ENCODE measurements at regions of chr9 and their contacts with region 1.

Region 1: GRCh38 chr9:130107234-130107861 is 53.6 kb downstream of the GPR107 start:
- DNase-seq: peak; percentile 73 to 82 (median 77)
- H3K4me3 ChIP-seq: no peak overlapping the region
- H3K4me3 Mint-ChIP-seq: peak overlapping the region in 2 of 8 donors; percentile 18 to 30
- H3K27ac ChIP-seq: no peak overlapping the region
- H3K27ac Mint-ChIP-seq: peak overlapping the region; percentile 39 to 85 (median 80)
- H3K4me1 ChIP-seq: peaks cover 9% of the 10 kb centered on the region
- H3K4me1 Mint-ChIP-seq: peaks cover 10 to 15% (median 14%) of the 10 kb centered on the region in 4 donors
- H3K27me3 ChIP-seq: no peaks in the 10 kb centered on the region
- H3K27me3 Mint-ChIP-seq: no peaks in the 10 kb centered on the region

Region 2: GRCh38 chr9:129944506-129945116 is 162.7 kb before region 1 on chr9:
- CTCF ChIA-PET with region 1: no interaction called
- POLR2A ChIA-PET with region 1: no interaction called
- intact Hi-C with region 1: no loop called
- DNase-seq: peak; percentile 70 to 83 (median 80)
- H3K4me3 ChIP-seq: no peak overlapping the region
- H3K4me3 Mint-ChIP-seq: peak overlapping the region; percentile 33 to 80 (median 52)
- H3K27ac ChIP-seq: peak overlapping the region; percentile 60
- H3K27ac Mint-ChIP-seq: peak overlapping the region; percentile 35 to 92 (median 85)
- H3K4me1 ChIP-seq: peaks cover 59% of the 10 kb centered on the region
- H3K4me1 Mint-ChIP-seq: peaks cover 35 to 70% (median 50%) of the 10 kb centered on the region in 4 donors
- H3K27me3 ChIP-seq: no peaks in the 10 kb centered on the region
- H3K27me3 Mint-ChIP-seq: no peaks in the 10 kb centered on the region

Region 3: GRCh38 chr9:130122456-130122855 is 15.1 kb after region 1 on chr9:
- CTCF ChIA-PET with region 1: interaction called, 27 read pairs
- POLR2A ChIA-PET with region 1: interaction called, 3 read pairs
- intact Hi-C with region 1: no loop called
- DNase-seq: no peak
- H3K4me3 ChIP-seq: no peak overlapping the region
- H3K4me3 Mint-ChIP-seq: no peak overlapping the region
- H3K27ac ChIP-seq: no peak overlapping the region
- H3K27ac Mint-ChIP-seq: no peak overlapping the region
- H3K4me1 ChIP-seq: peaks cover 15% of the 10 kb centered on the region
- H3K4me1 Mint-ChIP-seq: peaks cover 9 to 12% (median 11%) of the 10 kb centered on the region in 4 donors
- H3K27me3 ChIP-seq: no peaks in the 10 kb centered on the region
- H3K27me3 Mint-ChIP-seq: no peaks in the 10 kb centered on the region

Region 4: DNA sequence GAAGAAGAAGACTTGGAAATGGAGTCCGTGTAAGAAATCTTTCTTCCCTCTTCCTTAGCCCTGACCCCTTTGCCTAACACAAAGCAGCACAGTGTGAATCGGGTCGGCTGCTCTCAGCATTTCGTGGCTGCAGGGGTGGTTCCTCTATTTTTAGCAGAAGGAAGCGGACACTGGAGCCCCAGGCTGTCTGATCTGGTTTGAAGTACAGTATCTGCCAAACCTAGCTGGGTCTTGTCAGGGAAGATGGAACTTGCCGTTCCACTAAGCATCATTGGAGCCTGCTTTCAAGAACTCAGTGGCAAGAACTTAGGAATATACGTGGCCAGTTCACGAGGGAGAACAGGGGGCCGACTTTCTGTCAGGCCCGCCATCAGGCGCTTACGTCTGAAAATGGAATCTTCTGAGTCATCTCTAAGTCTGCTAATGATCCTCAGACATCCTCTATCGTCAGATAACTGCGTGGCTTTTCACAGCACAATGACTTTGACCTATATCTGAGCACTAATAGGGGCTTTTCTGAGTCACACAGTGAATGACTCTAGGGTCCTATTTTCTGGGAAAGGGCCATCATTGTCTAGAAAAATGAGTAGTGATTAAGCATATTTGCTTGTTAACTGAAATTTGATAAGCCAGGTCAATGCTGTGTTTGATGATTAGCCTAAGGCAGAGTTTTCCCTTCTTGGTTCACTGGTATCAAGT is 21.5 kb after region 1 on chr9:
- CTCF ChIA-PET with region 1: interaction called, 27 read pairs
- POLR2A ChIA-PET with region 1: interaction called, 5 read pairs
- intact Hi-C with region 1: loop called (anchors 1 kb)
- DNase-seq: peak; percentile 53 to 89 (median 60)
- H3K4me3 ChIP-seq: peak overlapping the region in 1 of 2 donors; percentile 39
- H3K4me3 Mint-ChIP-seq: peak overlapping the region; percentile 79 to 87 (median 84)
- H3K27ac ChIP-seq: peak overlapping the region; percentile 92
- H3K27ac Mint-ChIP-seq: peak overlapping the region; percentile 97 to 100 (median 99)
- H3K4me1 ChIP-seq: peaks cover 60% of the 10 kb centered on the region
- H3K4me1 Mint-ChIP-seq: peaks cover 40 to 67% (median 53%) of the 10 kb centered on the region in 4 donors
- H3K27me3 ChIP-seq: no peaks in the 10 kb centered on the region
- H3K27me3 Mint-ChIP-seq: no peaks in the 10 kb centered on the region

Region 5: DNA sequence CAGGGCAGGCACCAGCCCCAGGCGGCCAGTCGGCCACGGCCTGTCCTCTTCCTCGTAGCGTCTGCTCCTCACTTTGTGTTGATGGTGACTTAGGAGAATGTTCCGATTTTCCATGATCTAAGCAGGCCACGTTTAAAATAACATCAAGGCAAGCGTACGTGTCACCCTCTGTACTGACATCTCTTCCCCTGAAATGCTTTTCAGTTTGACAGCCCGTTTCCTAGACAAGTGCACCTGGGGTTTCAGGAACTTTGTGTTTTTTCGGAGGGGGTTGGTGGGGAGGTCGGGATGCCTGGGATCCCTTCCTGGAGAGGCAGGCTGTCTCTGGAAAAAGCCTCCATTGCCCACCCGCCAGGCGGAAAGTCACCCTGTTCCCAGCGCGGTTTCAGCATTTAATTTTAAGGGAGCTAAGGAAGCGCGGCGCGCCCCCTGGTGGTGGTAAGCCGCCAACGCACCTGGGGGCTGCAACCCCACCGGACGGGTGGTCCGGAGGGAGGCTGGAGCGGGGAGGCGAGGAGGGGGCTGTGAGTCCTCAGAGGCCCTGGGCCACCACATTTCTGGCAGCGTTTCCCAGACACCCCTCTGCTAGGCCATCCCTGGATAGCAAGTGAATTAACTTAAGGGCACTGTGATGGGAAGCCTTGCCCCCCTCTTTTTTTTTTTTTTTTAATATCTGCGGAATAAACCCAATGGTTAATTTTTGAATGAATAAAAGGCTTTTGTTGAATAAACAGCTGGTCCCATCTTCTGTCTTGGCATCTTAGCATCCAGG is 128.7 kb after region 1 on chr9:
- CTCF ChIA-PET with region 1: interaction called, 74 read pairs
- POLR2A ChIA-PET with region 1: interaction called, 8 read pairs
- intact Hi-C with region 1: loop called (anchors 1 kb)
- DNase-seq: peak in 4 of 5 donors; percentile 55 to 70 (median 60)
- H3K4me3 ChIP-seq: no peak overlapping the region
- H3K4me3 Mint-ChIP-seq: peak overlapping the region in 3 of 8 donors; percentile 29 to 55 (median 46)
- H3K27ac ChIP-seq: no peak overlapping the region
- H3K27ac Mint-ChIP-seq: peak overlapping the region in 3 of 7 donors; percentile 27 to 84 (median 57)
- H3K4me1 ChIP-seq: peaks cover 28% of the 10 kb centered on the region
- H3K4me1 Mint-ChIP-seq: peaks cover 9 to 43% (median 17%) of the 10 kb centered on the region in 4 donors
- H3K27me3 ChIP-seq: no peaks in the 10 kb centered on the region
- H3K27me3 Mint-ChIP-seq: no peaks in the 10 kb centered on the region

Region 6: GRCh38 chr9:130243015-130243734 is 135.8 kb after region 1 on chr9:
- CTCF ChIA-PET with region 1: interaction called, 74 read pairs
- POLR2A ChIA-PET with region 1: interaction called, 5 read pairs
- intact Hi-C with region 1: no loop called
- DNase-seq: peak; percentile 74 to 81 (median 75)
- H3K4me3 ChIP-seq: peak overlapping the region in 1 of 2 donors; percentile 44
- H3K4me3 Mint-ChIP-seq: peak overlapping the region; percentile 72 to 87 (median 82)
- H3K27ac ChIP-seq: no peak overlapping the region
- H3K27ac Mint-ChIP-seq: peak overlapping the region; percentile 29 to 90 (median 83)
- H3K4me1 ChIP-seq: peaks cover 33% of the 10 kb centered on the region
- H3K4me1 Mint-ChIP-seq: peaks cover 18 to 50% (median 26%) of the 10 kb centered on the region in 4 donors
- H3K27me3 ChIP-seq: no peaks in the 10 kb centered on the region
- H3K27me3 Mint-ChIP-seq: no peaks in the 10 kb centered on the region

Measured in CD4-positive, alpha-beta memory T cell (primary cell).